SK-N-SH (cell line): ENCODE measurements at regions of chr7 and their contacts with region 1.

Region 1: GRCh38 chr7:16078076-16078952 is 343.0 kb downstream of the CRPPA start:
- DNase-seq: peak; percentile 51
- H3K4me3 ChIP-seq: no peak overlapping the region
- H3K27ac ChIP-seq: no peak overlapping the region
- H3K4me1 ChIP-seq: no peaks in the 10 kb centered on the region; a peak in 1 of 4 replicates
- H3K27me3 ChIP-seq: no peaks in the 10 kb centered on the region; the same call in 1 of the 2 replicates
- CTCF ChIP-seq: peak; percentile 89
- EP300 ChIP-seq: no peak
- RAD21 ChIP-seq: peak; percentile 98

Region 2: DNA sequence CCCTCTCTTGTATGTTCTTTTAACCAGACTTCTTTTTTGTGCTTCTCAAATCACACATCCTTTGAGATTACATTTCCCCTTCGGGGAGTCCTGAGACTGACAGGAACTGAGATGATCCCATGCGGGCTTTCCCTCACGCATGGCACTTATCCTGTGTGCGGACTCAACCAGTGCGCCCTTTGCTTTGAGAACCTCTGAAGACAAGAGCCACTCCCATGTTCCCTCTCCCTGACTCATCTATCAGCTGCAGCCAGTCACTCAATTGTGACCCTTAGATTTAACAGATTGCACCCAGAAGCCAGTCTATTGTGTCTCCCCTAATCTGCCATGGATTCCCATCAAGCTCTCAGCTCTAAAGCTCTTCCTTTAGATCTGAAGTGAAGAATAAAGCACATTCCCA is 38.0 kb before region 1 on chr7:
- CTCF ChIA-PET with region 1: no interaction called
- POLR2A ChIA-PET with region 1: no interaction called
- DNase-seq: no peak
- H3K4me3 ChIP-seq: no peak overlapping the region
- H3K27ac ChIP-seq: no peak overlapping the region
- H3K4me1 ChIP-seq: no peaks in the 10 kb centered on the region
- H3K27me3 ChIP-seq: peaks cover 12% of the 10 kb centered on the region; the same call in 1 of the 2 replicates
- CTCF ChIP-seq: no peak
- EP300 ChIP-seq: no peak
- RAD21 ChIP-seq: no peak

Region 3: DNA sequence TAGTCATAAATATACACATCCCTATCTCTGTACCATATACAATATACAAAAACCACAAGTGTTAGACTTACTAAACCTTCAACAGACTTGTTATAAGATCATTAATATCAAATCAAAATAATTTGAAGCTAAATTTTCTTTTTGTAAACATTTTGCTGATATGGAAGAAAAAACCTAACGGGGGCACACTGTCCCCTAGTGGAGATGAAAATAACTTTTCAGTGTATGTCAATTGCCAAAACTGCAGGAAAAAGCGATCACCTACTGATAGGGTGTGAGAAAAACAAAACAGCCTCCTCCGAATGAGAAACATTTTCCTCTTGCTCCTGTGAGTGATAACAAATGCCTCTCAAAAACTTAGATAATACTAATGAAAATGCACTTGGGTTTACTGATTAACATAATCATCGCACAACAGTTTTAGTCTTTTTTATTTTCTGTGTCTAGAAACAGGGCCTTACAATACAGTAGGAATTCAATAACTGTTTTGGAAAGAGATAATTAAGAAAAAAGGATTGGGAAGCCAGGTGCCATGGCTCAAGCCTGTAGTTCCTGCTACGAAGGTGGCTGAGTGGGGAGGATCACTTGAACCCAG is 20.4 kb after region 1 on chr7:
- CTCF ChIA-PET with region 1: interaction called, 35 read pairs
- POLR2A ChIA-PET with region 1: no interaction called
- DNase-seq: no peak
- H3K4me3 ChIP-seq: no peak overlapping the region
- H3K27ac ChIP-seq: no peak overlapping the region
- H3K4me1 ChIP-seq: no peaks in the 10 kb centered on the region; a peak in 1 of 4 replicates
- H3K27me3 ChIP-seq: no peaks in the 10 kb centered on the region
- CTCF ChIP-seq: peak; percentile 93
- EP300 ChIP-seq: no peak
- RAD21 ChIP-seq: peak; percentile 60

Region 4: GRCh38 chr7:16357921-16358320 is 279.6 kb after region 1 on chr7:
- CTCF ChIA-PET with region 1: interaction called, 15 read pairs
- POLR2A ChIA-PET with region 1: no interaction called
- DNase-seq: peak; percentile 62
- H3K4me3 ChIP-seq: no peak overlapping the region
- H3K27ac ChIP-seq: peak overlapping the region in 1 of 2 experiments; percentile 76; a peak in 2 of 4 replicates
- H3K4me1 ChIP-seq: peaks cover 0 to 21% of the 10 kb centered on the region in 2 experiments; a peak in 2 of 4 replicates
- H3K27me3 ChIP-seq: no peaks in the 10 kb centered on the region
- CTCF ChIP-seq: no peak
- EP300 ChIP-seq: no peak; a peak in 1 of 4 replicates
- RAD21 ChIP-seq: peak; percentile 73

Region 5: GRCh38 chr7:16559497-16560179 is 481.3 kb after region 1 on chr7:
- CTCF ChIA-PET with region 1: interaction called, 93 read pairs
- POLR2A ChIA-PET with region 1: no interaction called
- DNase-seq: no peak
- H3K4me3 ChIP-seq: no peak overlapping the region
- H3K27ac ChIP-seq: no peak overlapping the region
- H3K4me1 ChIP-seq: peaks cover 3 to 16% of the 10 kb centered on the region in 2 experiments; a peak in 2 of 4 replicates
- H3K27me3 ChIP-seq: no peaks in the 10 kb centered on the region; the same call in 1 of the 2 replicates
- CTCF ChIP-seq: no peak
- EP300 ChIP-seq: no peak
- RAD21 ChIP-seq: no peak